Activated naive CD4-positive, alpha-beta T cell treated with anti-CD3 and anti-CD28 coated beads for 36 hours (primary cell): ENCODE measurements at regions of chr6 and their contacts with region 1.

Region 1: DNA sequence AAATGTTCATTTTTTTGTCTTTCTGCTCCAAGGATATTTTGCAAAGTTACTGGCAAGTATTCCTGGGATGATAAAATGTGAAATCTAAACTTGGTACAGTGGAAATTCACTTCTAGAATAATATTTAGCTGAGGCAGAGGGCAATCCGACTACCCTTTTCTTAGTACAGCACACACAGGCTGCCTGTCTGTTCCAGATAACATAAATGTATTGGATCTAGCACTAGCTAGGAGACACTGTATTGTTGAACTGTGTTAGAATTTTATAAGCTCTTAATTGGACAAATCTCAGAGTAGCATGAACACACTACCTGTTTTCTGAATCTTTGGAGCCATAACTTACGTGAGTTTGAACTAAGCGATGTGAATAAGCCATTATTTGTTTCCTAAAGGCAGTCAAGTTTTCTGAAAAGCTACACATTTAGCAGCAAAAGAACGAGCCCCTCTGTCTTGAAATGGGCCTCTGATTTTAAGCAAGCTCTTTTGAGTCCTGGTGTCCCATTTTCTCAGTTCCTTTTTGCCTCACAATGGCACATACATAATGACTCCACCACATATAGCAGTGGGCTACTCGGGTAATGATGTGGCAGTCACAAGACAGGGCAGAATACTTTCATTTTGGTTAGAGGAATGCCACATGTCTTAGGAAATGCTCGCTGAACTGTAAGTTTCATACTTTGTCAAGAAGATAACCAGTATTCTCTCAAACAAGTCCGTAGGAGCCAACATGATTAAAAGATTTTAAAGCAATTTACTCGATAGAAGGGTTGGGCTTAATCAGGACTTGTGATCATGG is 116.5 kb upstream of the ESR1 start:
- DNase-seq: peak; percentile 65
- H3K4me3 Mint-ChIP-seq: peak overlapping the region; percentile 67
- H3K27ac Mint-ChIP-seq: peak overlapping the region; percentile 87
- H3K4me1 Mint-ChIP-seq: peaks cover 19% of the 10 kb centered on the region
- H3K27me3 Mint-ChIP-seq: no peaks in the 10 kb centered on the region

Region 2: GRCh38 chr6:151675746-151676416 is 15.1 kb before region 1 on chr6:
- CTCF ChIA-PET with region 1: interaction called, 17 read pairs
- intact Hi-C with region 1: no loop called
- DNase-seq: peak; percentile 69
- H3K4me3 Mint-ChIP-seq: no peak overlapping the region
- H3K27ac Mint-ChIP-seq: no peak overlapping the region
- H3K4me1 Mint-ChIP-seq: peaks cover 8% of the 10 kb centered on the region
- H3K27me3 Mint-ChIP-seq: no peaks in the 10 kb centered on the region

Region 3: DNA sequence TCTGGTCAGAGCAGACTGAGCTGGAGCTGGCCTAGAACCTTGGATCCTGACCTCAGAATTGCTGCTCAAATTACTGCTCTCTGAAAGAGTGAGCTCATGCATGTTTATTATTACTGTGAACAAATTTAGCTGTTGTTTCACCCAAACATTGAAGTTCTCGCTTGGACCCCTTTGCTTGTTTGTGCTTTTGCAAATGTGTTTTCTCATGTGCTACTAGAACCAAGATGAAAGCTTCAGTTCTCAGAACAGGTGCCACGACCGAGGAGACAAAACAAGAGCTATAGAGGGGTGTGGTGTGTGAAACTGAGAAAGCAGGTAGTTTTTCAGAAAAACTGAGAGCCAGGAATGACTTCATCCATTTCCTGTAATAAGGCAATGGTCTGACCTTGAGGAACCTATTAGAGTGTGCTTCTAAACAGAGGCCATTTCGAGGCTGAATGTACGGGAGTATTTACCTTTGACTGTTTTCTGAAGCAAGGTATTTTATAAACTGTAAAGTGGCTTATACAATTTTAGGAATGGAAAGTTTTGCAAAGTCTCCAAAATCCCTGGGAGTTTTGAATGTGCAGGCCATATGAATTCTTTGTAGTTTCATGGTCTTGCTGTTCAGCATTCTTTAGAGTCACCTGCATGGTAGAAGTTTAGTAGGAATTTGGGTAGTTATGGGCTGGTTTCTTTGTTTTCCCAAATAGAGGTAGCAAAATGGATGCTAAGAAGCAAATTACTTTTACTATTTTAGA is 66.7 kb after region 1 on chr6:
- CTCF ChIA-PET with region 1: interaction called, 15 read pairs
- intact Hi-C with region 1: loop called (anchors 1 kb)
- DNase-seq: peak; percentile 67
- H3K4me3 Mint-ChIP-seq: peak overlapping the region; percentile 36
- H3K27ac Mint-ChIP-seq: peak overlapping the region; percentile 80
- H3K4me1 Mint-ChIP-seq: peaks cover 37% of the 10 kb centered on the region
- H3K27me3 Mint-ChIP-seq: no peaks in the 10 kb centered on the region

Region 4: GRCh38 chr6:151962246-151962846 is 271.4 kb after region 1 on chr6:
- CTCF ChIA-PET with region 1: interaction called, 3 read pairs
- intact Hi-C with region 1: loop called (anchors 5 kb)
- DNase-seq: peak; percentile 18
- H3K4me3 Mint-ChIP-seq: no peak overlapping the region
- H3K27ac Mint-ChIP-seq: no peak overlapping the region
- H3K4me1 Mint-ChIP-seq: peaks cover 16% of the 10 kb centered on the region
- H3K27me3 Mint-ChIP-seq: peaks cover 10% of the 10 kb centered on the region

Region 5: GRCh38 chr6:152170705-152171667 is 480.0 kb after region 1 on chr6:
- CTCF ChIA-PET with region 1: interaction called, 5 read pairs
- intact Hi-C with region 1: loop called (anchors 1 kb)
- DNase-seq: peak; percentile 82
- H3K4me3 Mint-ChIP-seq: peak overlapping the region; percentile 60
- H3K27ac Mint-ChIP-seq: peak overlapping the region; percentile 89
- H3K4me1 Mint-ChIP-seq: peaks cover 50% of the 10 kb centered on the region
- H3K27me3 Mint-ChIP-seq: no peaks in the 10 kb centered on the region

Region 6: GRCh38 chr6:152338335-152339125 is 647.6 kb after region 1 on chr6:
- CTCF ChIA-PET with region 1: no interaction called
- intact Hi-C with region 1: loop called (anchors 1 kb)
- DNase-seq: peak; percentile 69
- H3K4me3 Mint-ChIP-seq: no peak overlapping the region
- H3K27ac Mint-ChIP-seq: no peak overlapping the region
- H3K4me1 Mint-ChIP-seq: no peaks in the 10 kb centered on the region
- H3K27me3 Mint-ChIP-seq: no peaks in the 10 kb centered on the region